ENCODE measurements at regions of chr14 and their contacts with region 1.

Region 1: GRCh38 chr14:61342486-61342885 is 21.1 kb downstream of the PRKCH start:
- DNase-seq: peak; percentile 87 to 95 (median 88)
- H3K4me3 ChIP-seq: peak overlapping the region; percentile 25 to 42
- H3K4me3 Mint-ChIP-seq: peak overlapping the region; percentile 72 to 92 (median 82)
- H3K27ac ChIP-seq: peak overlapping the region; percentile 78
- H3K27ac Mint-ChIP-seq: peak overlapping the region; percentile 93 to 98 (median 98)
- H3K4me1 ChIP-seq: peaks cover 97% of the 10 kb centered on the region
- H3K4me1 Mint-ChIP-seq: peaks cover 82 to 95% (median 88%) of the 10 kb centered on the region in 4 donors
- H3K27me3 ChIP-seq: no peaks in the 10 kb centered on the region
- H3K27me3 Mint-ChIP-seq: no peaks in the 10 kb centered on the region

Region 2: GRCh38 chr14:61326847-61327246 is 15.6 kb before region 1 on chr14:
- CTCF ChIA-PET with region 1: interaction called, 84 read pairs
- POLR2A ChIA-PET with region 1: interaction called, 578 read pairs
- intact Hi-C with region 1: loop called (anchors 1 kb)
- DNase-seq: peak in 1 of 5 donors; percentile 43
- H3K4me3 ChIP-seq: peak overlapping the region; percentile 39 to 51
- H3K4me3 Mint-ChIP-seq: peak overlapping the region; percentile 77 to 100 (median 98)
- H3K27ac ChIP-seq: peak overlapping the region; percentile 89
- H3K27ac Mint-ChIP-seq: peak overlapping the region in 6 of 7 donors; percentile 84 to 99 (median 94)
- H3K4me1 ChIP-seq: peaks cover 67% of the 10 kb centered on the region
- H3K4me1 Mint-ChIP-seq: peaks cover 47 to 88% (median 56%) of the 10 kb centered on the region in 4 donors
- H3K27me3 ChIP-seq: no peaks in the 10 kb centered on the region
- H3K27me3 Mint-ChIP-seq: no peaks in the 10 kb centered on the region

Region 3: DNA sequence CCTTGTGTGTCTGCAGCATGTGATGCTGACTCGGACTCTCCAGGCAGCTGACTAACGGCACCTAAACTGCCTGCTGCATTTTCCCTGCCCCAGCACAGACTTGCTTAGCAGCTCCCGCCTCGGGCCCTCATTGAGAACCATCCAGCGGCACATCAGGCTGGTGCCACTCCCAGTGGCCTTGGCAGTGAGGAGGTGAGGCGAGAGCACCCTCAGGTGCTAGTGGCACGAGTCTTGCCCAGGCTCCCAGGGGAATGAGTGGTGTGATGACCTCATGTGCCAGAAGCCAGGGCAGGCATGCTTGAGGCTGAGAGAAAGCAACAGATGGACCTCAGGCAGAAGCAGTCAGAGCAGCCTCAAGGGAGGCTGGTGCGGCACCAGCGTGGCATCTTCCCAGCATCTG is 39.1 kb after region 1 on chr14:
- CTCF ChIA-PET with region 1: interaction called, 5 read pairs
- POLR2A ChIA-PET with region 1: interaction called, 133 read pairs
- intact Hi-C with region 1: loop called (anchors 2 kb)
- DNase-seq: no peak
- H3K4me3 ChIP-seq: no peak overlapping the region
- H3K4me3 Mint-ChIP-seq: peak overlapping the region in 7 of 8 donors; percentile 23 to 87 (median 68)
- H3K27ac ChIP-seq: peak overlapping the region; percentile 27
- H3K27ac Mint-ChIP-seq: peak overlapping the region in 5 of 7 donors; percentile 77 to 93 (median 88)
- H3K4me1 ChIP-seq: peaks cover 100% of the 10 kb centered on the region
- H3K4me1 Mint-ChIP-seq: peaks cover 0 to 66% (median 29%) of the 10 kb centered on the region in 4 donors
- H3K27me3 ChIP-seq: no peaks in the 10 kb centered on the region
- H3K27me3 Mint-ChIP-seq: no peaks in the 10 kb centered on the region

Region 4: DNA sequence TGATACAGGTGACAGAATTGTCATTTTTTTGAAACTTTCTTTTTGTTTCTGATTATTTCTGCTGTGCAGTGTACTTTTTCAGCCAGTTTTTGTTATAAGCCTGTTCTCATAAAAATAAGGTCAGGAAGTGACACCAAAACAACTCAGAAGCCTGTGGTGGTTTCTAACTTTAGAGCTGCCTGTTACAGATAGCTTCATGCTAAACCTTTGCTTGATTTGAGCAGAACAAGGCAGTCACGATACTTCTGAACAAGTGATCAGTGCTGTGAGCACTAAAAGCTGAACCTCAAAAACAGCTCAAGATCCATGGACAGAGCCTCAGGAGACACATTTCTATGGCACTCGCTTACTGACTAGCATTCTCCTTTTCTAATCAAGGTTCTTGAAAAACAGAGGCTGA is 60.9 kb after region 1 on chr14:
- CTCF ChIA-PET with region 1: interaction called, 8 read pairs
- POLR2A ChIA-PET with region 1: interaction called, 21 read pairs
- intact Hi-C with region 1: loop called (anchors 1 kb)
- DNase-seq: peak; percentile 49 to 69 (median 59)
- H3K4me3 ChIP-seq: no peak overlapping the region
- H3K4me3 Mint-ChIP-seq: peak overlapping the region; percentile 59 to 88 (median 70)
- H3K27ac ChIP-seq: peak overlapping the region; percentile 52
- H3K27ac Mint-ChIP-seq: peak overlapping the region; percentile 65 to 97 (median 93)
- H3K4me1 ChIP-seq: peaks cover 96% of the 10 kb centered on the region
- H3K4me1 Mint-ChIP-seq: peaks cover 65 to 90% (median 78%) of the 10 kb centered on the region in 4 donors
- H3K27me3 ChIP-seq: no peaks in the 10 kb centered on the region
- H3K27me3 Mint-ChIP-seq: no peaks in the 10 kb centered on the region

Region 5: GRCh38 chr14:61456720-61457119 is 114.2 kb after region 1 on chr14:
- CTCF ChIA-PET with region 1: interaction called, 5 read pairs
- POLR2A ChIA-PET with region 1: interaction called, 38 read pairs
- intact Hi-C with region 1: no loop called
- DNase-seq: peak; percentile 74 to 83 (median 77)
- H3K4me3 ChIP-seq: no peak overlapping the region
- H3K4me3 Mint-ChIP-seq: peak overlapping the region in 2 of 8 donors; percentile 17 to 27
- H3K27ac ChIP-seq: peak overlapping the region; percentile 13
- H3K27ac Mint-ChIP-seq: peak overlapping the region; percentile 75 to 97 (median 92)
- H3K4me1 ChIP-seq: peaks cover 70% of the 10 kb centered on the region
- H3K4me1 Mint-ChIP-seq: peaks cover 63 to 91% (median 71%) of the 10 kb centered on the region in 4 donors
- H3K27me3 ChIP-seq: no peaks in the 10 kb centered on the region
- H3K27me3 Mint-ChIP-seq: no peaks in the 10 kb centered on the region